Natural killer cell (primary cell): ENCODE measurements at regions of chr19 and their contacts with region 1.

Region 1: DNA sequence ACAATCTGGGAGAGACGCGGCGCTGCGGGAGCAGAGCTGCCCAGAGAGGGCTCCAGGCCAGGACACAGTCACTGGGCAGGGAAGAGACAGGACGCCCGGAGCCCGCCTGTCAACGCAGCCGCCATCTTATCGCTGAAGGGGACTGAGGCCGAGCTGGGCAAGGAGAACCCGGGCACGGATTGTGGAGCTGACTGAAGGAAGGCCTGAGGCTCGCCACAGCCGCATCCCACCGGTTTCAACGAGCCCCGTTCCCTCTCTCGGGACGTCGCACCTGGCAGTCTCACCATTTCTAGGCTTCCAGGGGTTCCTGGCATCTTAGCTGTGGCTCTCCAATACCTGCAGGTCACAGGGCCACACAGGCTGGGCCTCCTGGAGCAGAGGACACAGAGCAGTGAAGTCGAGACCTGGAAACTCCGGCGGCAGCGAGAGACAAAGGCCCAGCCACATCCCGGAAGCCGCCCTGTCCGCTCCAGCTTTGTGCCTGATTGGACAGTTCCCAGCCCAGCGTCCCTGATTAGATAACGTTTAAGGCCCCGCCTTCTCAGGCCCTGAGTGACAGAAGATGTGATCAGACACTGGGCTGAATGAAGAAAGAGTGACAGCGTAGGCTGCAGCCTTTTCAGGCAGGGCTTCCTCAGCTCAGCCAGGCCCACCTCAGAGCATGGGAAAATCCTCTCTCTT is at the start of gene ZNF91:
- DNase-seq: peak; percentile 90 to 96
- ATAC-seq: peak; percentile 90 to 98 (median 93)
- H3K4me3 ChIP-seq: peak within 1 kb of the TSS; percentile 89
- H3K4me3 Mint-ChIP-seq: peak within 1 kb of the TSS; percentile 98
- H3K27ac ChIP-seq: peak within 1 kb of the TSS; percentile 96
- H3K27ac Mint-ChIP-seq: peak within 1 kb of the TSS; percentile 96 to 99
- H3K4me1 ChIP-seq: peaks cover 17% of the 10 kb centered on the region
- H3K4me1 Mint-ChIP-seq: peaks cover 37% of the 10 kb centered on the region in 2 donors
- H3K27me3 ChIP-seq: no peaks in the 10 kb centered on the region
- H3K27me3 Mint-ChIP-seq: no peaks in the 10 kb centered on the region
- CTCF ChIP-seq: no peak
- total RNA-seq, gene ZNF91: 92.3 to 144 (median 96.7) TPM

Region 2: GRCh38 chr19:23249911-23250649 is 145.1 kb before region 1 on chr19 and contains the start of gene ZNF724:
- intact Hi-C with region 1: loop called (anchors 2 kb)
- DNase-seq: peak; percentile 85 to 94
- ATAC-seq: peak; percentile 98 to 100 (median 98)
- H3K4me3 ChIP-seq: peak within 1 kb of the TSS; percentile 60
- H3K4me3 Mint-ChIP-seq: peak within 1 kb of the TSS; percentile 98
- H3K27ac ChIP-seq: peak within 1 kb of the TSS; percentile 59
- H3K27ac Mint-ChIP-seq: peak within 1 kb of the TSS; percentile 87 to 93
- H3K4me1 ChIP-seq: peaks cover 12% of the 10 kb centered on the region
- H3K4me1 Mint-ChIP-seq: peaks cover 11 to 14% of the 10 kb centered on the region in 2 donors
- H3K27me3 ChIP-seq: no peaks in the 10 kb centered on the region
- H3K27me3 Mint-ChIP-seq: no peaks in the 10 kb centered on the region
- CTCF ChIP-seq: no peak
- total RNA-seq, gene ZNF724: 4.5 to 5.8 (median 4.9) TPM

Region 3: GRCh38 chr19:23273590-23274413 is 121.4 kb before region 1 on chr19:
- intact Hi-C with region 1: loop called (anchors 1 kb)
- DNase-seq: peak; percentile 88 to 94
- ATAC-seq: peak; percentile 98 to 100 (median 98)
- H3K4me3 ChIP-seq: peak overlapping the region; percentile 81
- H3K4me3 Mint-ChIP-seq: peak overlapping the region; percentile 97
- H3K27ac ChIP-seq: peak overlapping the region; percentile 72
- H3K27ac Mint-ChIP-seq: peak overlapping the region; percentile 86 to 91
- H3K4me1 ChIP-seq: peaks cover 8% of the 10 kb centered on the region
- H3K4me1 Mint-ChIP-seq: peaks cover 26% of the 10 kb centered on the region in 2 donors
- H3K27me3 ChIP-seq: no peaks in the 10 kb centered on the region
- H3K27me3 Mint-ChIP-seq: no peaks in the 10 kb centered on the region
- CTCF ChIP-seq: no peak

Region 4: GRCh38 chr19:23321948-23322549 is 73.1 kb before region 1 on chr19:
- intact Hi-C with region 1: no loop called
- DNase-seq: no peak
- ATAC-seq: no peak
- H3K4me3 ChIP-seq: no peak overlapping the region
- H3K4me3 Mint-ChIP-seq: no peak overlapping the region
- H3K27ac ChIP-seq: no peak overlapping the region
- H3K27ac Mint-ChIP-seq: no peak overlapping the region
- H3K4me1 ChIP-seq: no peaks in the 10 kb centered on the region
- H3K4me1 Mint-ChIP-seq: peaks cover 0 to 15% of the 10 kb centered on the region in 2 donors
- H3K27me3 ChIP-seq: no peaks in the 10 kb centered on the region
- H3K27me3 Mint-ChIP-seq: no peaks in the 10 kb centered on the region
- CTCF ChIP-seq: no peak

Region 5: GRCh38 chr19:23378948-23379347 is 16.2 kb before region 1 on chr19:
- intact Hi-C with region 1: loop called (anchors 2 kb)
- DNase-seq: peak in 1 of 2 donors; percentile 24
- ATAC-seq: peak; percentile 88 to 91 (median 89)
- H3K4me3 ChIP-seq: no peak overlapping the region
- H3K4me3 Mint-ChIP-seq: peak overlapping the region; percentile 70
- H3K27ac ChIP-seq: peak overlapping the region; percentile 20
- H3K27ac Mint-ChIP-seq: peak overlapping the region; percentile 86 to 92
- H3K4me1 ChIP-seq: peaks cover 7% of the 10 kb centered on the region
- H3K4me1 Mint-ChIP-seq: peaks cover 45 to 56% of the 10 kb centered on the region in 2 donors
- H3K27me3 ChIP-seq: no peaks in the 10 kb centered on the region
- H3K27me3 Mint-ChIP-seq: no peaks in the 10 kb centered on the region
- CTCF ChIP-seq: no peak

Region 6: GRCh38 chr19:23595643-23596042 is 200.5 kb after region 1 on chr19:
- intact Hi-C with region 1: no loop called
- DNase-seq: no peak
- ATAC-seq: no peak
- H3K4me3 ChIP-seq: no peak overlapping the region
- H3K4me3 Mint-ChIP-seq: no peak overlapping the region
- H3K27ac ChIP-seq: no peak overlapping the region
- H3K27ac Mint-ChIP-seq: no peak overlapping the region
- H3K4me1 ChIP-seq: no peaks in the 10 kb centered on the region
- H3K4me1 Mint-ChIP-seq: no peaks in the 10 kb centered on the region
- H3K27me3 ChIP-seq: no peaks in the 10 kb centered on the region
- H3K27me3 Mint-ChIP-seq: no peaks in the 10 kb centered on the region
- CTCF ChIP-seq: no peak